Sciatic nerve (tissue), 2 donors: ENCODE measurements at regions of chr7 and their contacts with region 1.

Region 1: GRCh38 chr7:121081327-121081936 is 92.9 kb downstream of the CPED1 start:
- DNase-seq: no peak
- ATAC-seq: peak; percentile 87

Region 2: DNA sequence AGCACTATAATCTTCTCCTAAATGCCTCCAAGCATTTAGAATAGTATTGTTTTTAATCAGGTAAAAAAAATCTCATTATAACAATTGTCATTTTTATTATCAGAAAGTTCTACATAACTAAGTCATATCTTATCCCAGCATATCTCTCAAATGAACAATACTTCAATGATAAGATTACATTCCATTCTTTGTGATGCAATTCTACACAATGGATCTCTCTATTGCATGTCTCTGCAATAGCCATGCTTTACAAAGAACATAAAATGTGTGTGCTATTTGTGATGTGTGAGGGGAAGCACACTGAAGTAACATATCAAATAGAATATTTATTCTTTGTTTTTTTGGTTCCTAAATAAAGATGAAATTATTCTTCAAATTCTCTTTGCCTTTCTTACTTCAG is 419.1 kb before region 1 on chr7:
- intact Hi-C with region 1: no loop called
- DNase-seq: no peak
- ATAC-seq: no peak

Region 3: DNA sequence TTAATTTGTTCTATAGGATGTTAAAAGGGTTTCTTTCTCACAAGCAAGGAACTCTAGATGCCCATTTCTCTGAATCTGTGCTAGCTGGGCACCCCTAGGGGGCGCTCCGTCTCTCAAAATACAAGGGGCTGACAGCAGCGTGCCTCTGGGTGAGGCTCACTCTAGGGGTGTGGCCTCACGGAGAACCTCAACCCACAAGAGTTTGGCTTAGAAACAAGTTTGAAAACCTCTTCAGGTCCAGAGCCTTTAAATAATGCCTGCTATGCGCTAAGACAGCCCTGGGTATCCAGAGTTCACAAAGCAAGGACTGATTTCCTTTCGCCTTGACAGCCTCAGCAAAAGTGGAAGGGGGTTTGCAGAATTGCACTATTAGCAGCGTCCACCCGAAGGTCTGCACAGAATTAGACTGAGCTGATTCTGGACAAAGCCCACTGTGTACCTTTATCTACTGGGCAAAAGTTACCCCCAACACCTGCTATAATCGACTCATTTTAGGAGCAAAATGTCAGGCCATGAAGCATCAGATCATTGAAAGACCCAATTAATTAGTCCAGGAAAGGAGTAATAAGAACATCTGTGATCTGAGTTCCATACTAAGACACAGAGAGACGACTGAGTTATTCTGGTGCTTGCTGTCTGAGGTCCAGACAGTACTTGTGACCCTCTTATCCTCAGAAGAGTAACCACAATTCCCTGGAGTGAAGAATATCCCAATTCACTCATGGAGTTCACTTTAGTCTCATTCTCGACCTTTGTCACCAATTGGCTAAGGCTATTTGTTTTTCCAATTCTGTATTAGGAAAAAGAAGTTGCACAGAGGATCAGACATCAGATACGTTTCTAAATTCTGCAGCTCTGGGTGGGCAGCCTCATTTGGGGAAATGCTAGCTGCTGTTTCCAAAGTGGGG is 93.5 kb before region 1 on chr7:
- intact Hi-C with region 1: loop called (anchors 5 kb)
- DNase-seq: peak; percentile 94
- ATAC-seq: peak; percentile 93